BJ (cell line): ENCODE measurements at regions of chr15 and their contacts with region 1.

Region 1: GRCh38 chr15:84929744-84930371 is 45.4 kb downstream of the SLC28A1 start:
- DNase-seq: peak; percentile 64
- H3K4me3 ChIP-seq: no peak overlapping the region
- H3K27me3 ChIP-seq: no peaks in the 10 kb centered on the region
- CTCF ChIP-seq: no peak

Region 2: GRCh38 chr15:84600851-84601838 is 328.7 kb before region 1 on chr15 and contains the start of gene ZSCAN2:
- CTCF ChIA-PET with region 1: interaction called, 11 read pairs
- POLR2A ChIA-PET with region 1: no interaction called
- DNase-seq: peak; percentile 59
- H3K4me3 ChIP-seq: peak within 1 kb of the TSS; percentile 97
- H3K27me3 ChIP-seq: no peaks in the 10 kb centered on the region
- CTCF ChIP-seq: no peak
- polyA plus RNA-seq, gene ZSCAN2: 5.9 and 6.3 TPM in 2 replicates

Region 3: GRCh38 chr15:84653910-84654704 is 275.8 kb before region 1 on chr15 and contains the start of gene WDR73:
- CTCF ChIA-PET with region 1: interaction called, 22 read pairs
- POLR2A ChIA-PET with region 1: no interaction called
- DNase-seq: no peak
- H3K4me3 ChIP-seq: peak within 1 kb of the TSS; percentile 76
- H3K27me3 ChIP-seq: no peaks in the 10 kb centered on the region
- CTCF ChIP-seq: no peak
- polyA plus RNA-seq, gene WDR73: 19.7 and 21.1 TPM in 2 replicates

Region 4: GRCh38 chr15:84840741-84841429 is 89.0 kb before region 1 on chr15:
- CTCF ChIA-PET with region 1: interaction called, 11 read pairs
- POLR2A ChIA-PET with region 1: no interaction called
- DNase-seq: peak; percentile 19
- H3K4me3 ChIP-seq: no peak overlapping the region
- H3K27me3 ChIP-seq: peaks cover 4% of the 10 kb centered on the region; the same call in 1 of the 2 replicates
- CTCF ChIP-seq: no peak

Region 5: DNA sequence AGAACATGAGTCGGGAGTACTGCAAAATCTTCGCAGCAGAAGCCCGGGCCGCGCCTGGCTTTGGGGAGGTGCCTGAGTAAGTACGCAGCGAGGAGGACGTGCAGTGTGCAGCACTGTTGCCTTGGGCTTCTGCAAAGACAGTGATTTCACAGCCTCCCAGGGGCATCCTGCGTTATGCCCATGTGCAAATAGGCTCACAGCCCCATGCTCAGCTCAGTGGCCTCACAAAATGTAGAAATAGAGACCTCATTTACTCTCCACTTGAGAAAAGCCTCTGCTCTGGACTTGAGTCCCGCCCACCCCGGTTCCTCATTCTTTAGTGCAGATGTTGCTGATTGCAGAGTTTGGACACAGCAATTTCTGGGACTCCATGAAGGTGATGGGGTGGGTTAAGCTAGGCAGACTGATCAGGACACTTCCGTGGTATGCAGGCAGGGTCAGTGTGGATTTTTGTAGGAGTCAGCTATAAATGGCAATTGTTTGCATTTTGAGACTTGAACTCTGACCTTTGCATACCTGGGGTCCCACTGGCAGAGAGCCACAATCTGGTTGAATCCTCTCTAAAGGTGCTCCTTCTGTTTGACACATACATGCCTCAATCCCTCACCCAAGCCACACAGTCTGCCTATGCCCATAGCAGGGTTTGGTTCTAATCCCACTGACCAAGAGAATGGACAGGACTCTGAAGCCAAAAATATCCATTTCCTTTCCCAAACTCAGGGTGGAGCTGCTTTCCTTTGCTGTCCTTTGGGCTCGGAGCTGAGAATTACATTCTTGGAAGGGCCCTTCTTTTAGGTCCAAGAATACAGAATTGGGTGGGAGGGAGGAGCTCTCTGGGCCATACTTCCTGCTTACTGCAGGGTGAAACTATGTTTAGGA is 66.1 kb before region 1 on chr15:
- CTCF ChIA-PET with region 1: interaction called, 34 read pairs
- POLR2A ChIA-PET with region 1: no interaction called
- DNase-seq: no peak
- H3K4me3 ChIP-seq: no peak overlapping the region
- H3K27me3 ChIP-seq: no peaks in the 10 kb centered on the region
- CTCF ChIP-seq: peak; percentile 18; the same call in 1 of the 2 replicates

Region 6: DNA sequence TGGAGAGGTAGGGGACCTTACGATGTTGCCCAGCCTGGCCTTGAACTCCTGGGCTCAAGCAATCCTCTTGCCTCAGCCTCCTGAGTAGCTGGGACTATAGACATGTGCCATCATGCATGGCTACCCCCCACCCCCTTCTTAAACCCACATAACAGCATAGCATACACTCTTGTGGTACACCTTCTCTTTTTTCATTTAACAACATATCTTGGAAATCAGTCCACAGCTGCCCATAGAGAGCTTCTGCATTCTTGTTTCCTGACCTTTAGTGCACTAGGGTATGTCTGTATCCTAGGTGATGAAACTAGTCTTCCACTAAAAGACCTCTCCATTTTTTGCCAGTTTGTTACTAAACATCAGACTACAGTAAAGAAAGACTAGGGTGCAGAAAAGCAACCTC is 12.4 kb before region 1 on chr15:
- CTCF ChIA-PET with region 1: interaction called, 12 read pairs
- POLR2A ChIA-PET with region 1: no interaction called
- DNase-seq: no peak
- H3K4me3 ChIP-seq: no peak overlapping the region
- H3K27me3 ChIP-seq: no peaks in the 10 kb centered on the region
- CTCF ChIP-seq: no peak

Region 7: GRCh38 chr15:85030301-85031049 is 100.6 kb after region 1 on chr15:
- CTCF ChIA-PET with region 1: no interaction called
- POLR2A ChIA-PET with region 1: no interaction called
- DNase-seq: no peak
- H3K4me3 ChIP-seq: no peak overlapping the region
- H3K27me3 ChIP-seq: no peaks in the 10 kb centered on the region
- CTCF ChIP-seq: no peak